Activated B cell treated with CpG ODN at 0.5 μM for 24 hours (primary cell): ENCODE measurements at regions of chr1 and their contacts with region 1.

Region 1: GRCh38 chr1:19311959-19312781 is at the starts of genes AKR7A2 and SLC66A1:
- DNase-seq: peak; percentile 96
- ATAC-seq: peak; percentile 91
- H3K4me3 Mint-ChIP-seq: peak within 1 kb of the TSS; percentile 90
- H3K27ac Mint-ChIP-seq: peak within 1 kb of the TSS; percentile 61
- H3K4me1 Mint-ChIP-seq: peaks cover 58% of the 10 kb centered on the region
- H3K27me3 Mint-ChIP-seq: no peaks in the 10 kb centered on the region
- CTCF ChIP-seq: no peak
- total RNA-seq, gene AKR7A2: 29.9 and 30.3 TPM in 2 replicates
- total RNA-seq, gene SLC66A1: 9.1 and 11.9 TPM in 2 replicates

Region 2: DNA sequence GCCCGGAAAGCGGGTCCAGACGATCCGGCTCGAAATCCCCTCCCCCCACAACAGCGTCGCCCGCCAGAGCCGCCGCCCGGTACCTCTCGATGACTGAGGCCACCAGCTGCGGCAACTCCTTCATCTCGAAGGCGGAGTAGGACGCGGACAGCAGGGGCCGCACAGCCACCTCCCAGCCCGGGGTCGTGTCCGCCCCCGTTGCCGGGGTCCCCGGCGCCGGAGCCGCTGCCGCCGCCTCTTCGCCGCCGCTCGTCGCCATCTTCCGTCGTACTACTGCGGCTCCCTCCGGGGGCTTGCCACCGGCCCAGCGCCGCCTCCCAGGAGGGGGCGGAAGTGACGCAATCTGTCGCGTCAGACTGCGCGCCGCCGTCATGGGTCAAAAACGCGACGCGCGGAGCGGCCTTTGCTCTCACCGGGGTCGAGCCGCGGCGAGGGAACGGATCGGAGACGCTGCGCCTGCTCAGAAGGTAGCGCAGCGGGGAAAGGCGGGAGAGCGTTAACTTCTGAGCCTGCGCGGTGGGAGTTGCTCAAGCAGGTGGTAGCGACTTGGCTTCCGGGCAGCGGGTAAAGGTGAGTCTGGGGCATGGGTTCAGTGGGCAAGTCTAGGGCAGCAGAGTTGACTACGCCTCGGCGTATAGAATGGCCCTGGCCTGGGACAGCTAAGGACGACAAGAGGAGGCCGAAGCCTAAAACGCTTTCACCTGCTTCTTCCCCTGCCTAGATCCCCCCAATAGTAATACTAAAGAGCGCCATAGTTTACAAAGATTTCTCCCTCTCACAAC is 102.0 kb before region 1 on chr1 and contains the start of gene UBR4:
- CTCF ChIA-PET with region 1: no interaction called
- POLR2A ChIA-PET with region 1: no interaction called
- intact Hi-C with region 1: loop called (anchors 2 kb)
- DNase-seq: peak; percentile 98
- ATAC-seq: peak; percentile 77
- H3K4me3 Mint-ChIP-seq: peak within 1 kb of the TSS; percentile 95
- H3K27ac Mint-ChIP-seq: peak within 1 kb of the TSS; percentile 97
- H3K4me1 Mint-ChIP-seq: peaks cover 57% of the 10 kb centered on the region
- H3K27me3 Mint-ChIP-seq: no peaks in the 10 kb centered on the region
- CTCF ChIP-seq: no peak
- total RNA-seq, gene UBR4: 221 and 262 TPM in 2 replicates

Region 3: DNA sequence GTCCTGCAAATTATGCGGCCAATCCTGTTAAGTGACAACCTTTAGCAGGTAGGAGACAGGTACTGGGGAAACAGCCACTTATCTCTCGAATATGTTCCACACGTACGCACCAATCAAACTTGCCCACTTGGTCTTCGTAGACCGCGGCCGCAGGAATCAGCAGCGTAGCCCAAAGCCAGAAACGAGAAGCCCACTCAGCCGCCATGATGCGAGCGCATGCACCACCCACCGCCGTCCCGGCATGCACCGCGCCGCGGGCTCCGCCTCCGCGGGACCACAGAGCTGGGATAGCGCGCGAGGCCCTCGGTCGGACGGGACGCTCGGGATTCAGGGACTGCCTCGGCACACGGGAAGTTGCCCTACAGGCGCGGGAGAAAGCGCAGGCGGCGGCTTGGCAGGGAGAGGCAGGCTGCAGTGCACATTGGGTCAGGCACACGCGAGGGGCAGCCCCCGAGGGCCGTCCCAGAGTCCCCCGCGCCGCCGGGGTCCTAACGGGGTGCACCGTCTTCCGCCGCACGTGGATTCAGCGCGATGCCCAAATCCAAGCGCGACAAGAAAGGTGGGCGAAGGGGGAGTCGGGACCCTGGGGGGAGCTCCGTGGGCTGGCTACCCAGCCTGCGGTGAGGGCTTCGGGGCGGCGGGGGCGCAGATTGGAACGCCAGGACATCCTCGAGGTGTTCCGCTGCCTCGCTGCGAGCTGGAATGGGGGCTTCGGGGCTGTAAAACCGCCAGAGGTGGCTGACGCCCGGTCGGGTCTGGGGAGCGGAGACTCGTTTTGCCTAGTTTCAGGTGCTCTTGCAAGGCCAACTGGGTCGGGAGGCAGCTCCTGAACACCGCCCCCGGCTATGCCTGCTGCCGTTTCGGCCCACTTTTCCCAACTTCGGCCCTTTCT is 60.6 kb before region 1 on chr1 and contains the starts of genes EMC1 and MRTO4:
- CTCF ChIA-PET with region 1: no interaction called
- POLR2A ChIA-PET with region 1: interaction called, 12 read pairs
- intact Hi-C with region 1: loop called (anchors 1 kb)
- DNase-seq: peak; percentile 97
- ATAC-seq: peak; percentile 93
- H3K4me3 Mint-ChIP-seq: peak within 1 kb of the TSS; percentile 96
- H3K27ac Mint-ChIP-seq: peak within 1 kb of the TSS; percentile 92
- H3K4me1 Mint-ChIP-seq: peaks cover 32% of the 10 kb centered on the region
- H3K27me3 Mint-ChIP-seq: no peaks in the 10 kb centered on the region
- CTCF ChIP-seq: no peak
- total RNA-seq, gene EMC1: 40.0 and 42.7 TPM in 2 replicates
- total RNA-seq, gene MRTO4: 61.5 and 73.1 TPM in 2 replicates

Region 4: GRCh38 chr1:19341201-19342072 is 29.3 kb after region 1 on chr1:
- CTCF ChIA-PET with region 1: no interaction called
- POLR2A ChIA-PET with region 1: no interaction called
- intact Hi-C with region 1: loop called (anchors 2 kb)
- DNase-seq: peak; percentile 64
- ATAC-seq: peak; percentile 85
- H3K4me3 Mint-ChIP-seq: no peak overlapping the region
- H3K27ac Mint-ChIP-seq: peak overlapping the region; percentile 35
- H3K4me1 Mint-ChIP-seq: no peaks in the 10 kb centered on the region
- H3K27me3 Mint-ChIP-seq: no peaks in the 10 kb centered on the region
- CTCF ChIP-seq: no peak

Region 5: DNA sequence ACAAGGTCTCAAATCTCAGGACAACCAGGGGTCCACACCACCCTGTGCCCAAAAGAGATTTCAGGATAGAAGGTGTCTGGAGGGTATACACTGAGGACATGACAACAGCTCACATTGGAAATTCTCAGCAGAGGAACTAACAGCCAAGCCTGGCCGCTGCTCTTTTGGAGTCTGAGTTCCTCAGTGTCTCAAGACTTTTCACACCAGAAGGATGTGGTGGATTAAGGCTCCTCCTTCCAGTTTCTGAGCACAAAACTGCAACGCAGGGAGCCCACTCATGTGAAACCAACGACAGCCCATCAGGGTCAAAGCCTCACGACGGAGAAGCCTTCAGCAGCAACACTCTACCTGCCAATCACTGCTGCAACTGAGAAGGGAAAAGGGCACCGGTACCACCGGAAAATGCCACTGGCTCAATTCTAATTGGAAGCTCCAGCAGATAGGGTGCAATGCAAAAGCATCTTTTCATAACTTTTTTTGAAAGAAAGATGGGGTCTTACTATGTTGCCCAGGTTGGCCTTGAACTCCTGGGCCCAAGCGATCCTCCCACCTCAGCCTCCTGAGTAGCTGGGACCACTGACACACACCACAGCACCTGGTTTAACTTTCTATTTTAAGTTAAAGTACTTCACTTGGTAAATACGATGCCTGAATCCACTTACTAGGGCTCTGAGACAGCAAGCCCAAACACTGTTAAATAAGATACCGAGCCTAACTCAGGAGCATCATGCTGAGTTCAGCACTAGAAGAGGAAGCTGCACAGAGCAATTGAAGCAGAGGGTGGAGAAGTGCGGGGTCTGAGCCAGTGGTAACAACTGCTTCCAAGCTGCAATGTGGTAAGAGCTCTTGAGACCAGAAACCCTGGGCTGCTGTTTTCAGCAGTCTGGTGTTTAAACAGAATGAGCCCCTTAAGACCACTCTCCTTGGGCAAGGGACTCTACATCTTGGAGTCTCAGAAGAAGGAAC is 165.4 kb after region 1 on chr1:
- CTCF ChIA-PET with region 1: no interaction called
- POLR2A ChIA-PET with region 1: no interaction called
- intact Hi-C with region 1: no loop called
- DNase-seq: no peak
- ATAC-seq: peak; percentile 74
- H3K4me3 Mint-ChIP-seq: peak overlapping the region; percentile 76
- H3K27ac Mint-ChIP-seq: peak overlapping the region; percentile 93
- H3K4me1 Mint-ChIP-seq: peaks cover 93% of the 10 kb centered on the region
- H3K27me3 Mint-ChIP-seq: no peaks in the 10 kb centered on the region
- CTCF ChIP-seq: no peak

Region 6: GRCh38 chr1:19596714-19597495 is 284.7 kb after region 1 on chr1:
- CTCF ChIA-PET with region 1: no interaction called
- POLR2A ChIA-PET with region 1: interaction called, 7 read pairs
- intact Hi-C with region 1: loop called (anchors 2 kb)
- DNase-seq: peak; percentile 86
- ATAC-seq: peak; percentile 91
- H3K4me3 Mint-ChIP-seq: peak overlapping the region; percentile 100
- H3K27ac Mint-ChIP-seq: peak overlapping the region; percentile 99
- H3K4me1 Mint-ChIP-seq: peaks cover 48% of the 10 kb centered on the region
- H3K27me3 Mint-ChIP-seq: no peaks in the 10 kb centered on the region
- CTCF ChIP-seq: no peak